ENCODE measurements at regions of chr3 and their contacts with region 1.

Region 1: GRCh38 chr3:171566803-171567422 is 106.7 kb upstream of the TNIK start:
- DNase-seq: no peak
- H3K4me3 ChIP-seq: no peak overlapping the region
- H3K27ac ChIP-seq: no peak overlapping the region
- H3K4me1 ChIP-seq: no peaks in the 10 kb centered on the region
- H3K27me3 ChIP-seq: no peaks in the 10 kb centered on the region
- CTCF ChIP-seq: peak; percentile 76 to 84 (median 81)
- EP300 ChIP-seq: no peak
- POLR2A ChIP-seq: no peak

Region 2: DNA sequence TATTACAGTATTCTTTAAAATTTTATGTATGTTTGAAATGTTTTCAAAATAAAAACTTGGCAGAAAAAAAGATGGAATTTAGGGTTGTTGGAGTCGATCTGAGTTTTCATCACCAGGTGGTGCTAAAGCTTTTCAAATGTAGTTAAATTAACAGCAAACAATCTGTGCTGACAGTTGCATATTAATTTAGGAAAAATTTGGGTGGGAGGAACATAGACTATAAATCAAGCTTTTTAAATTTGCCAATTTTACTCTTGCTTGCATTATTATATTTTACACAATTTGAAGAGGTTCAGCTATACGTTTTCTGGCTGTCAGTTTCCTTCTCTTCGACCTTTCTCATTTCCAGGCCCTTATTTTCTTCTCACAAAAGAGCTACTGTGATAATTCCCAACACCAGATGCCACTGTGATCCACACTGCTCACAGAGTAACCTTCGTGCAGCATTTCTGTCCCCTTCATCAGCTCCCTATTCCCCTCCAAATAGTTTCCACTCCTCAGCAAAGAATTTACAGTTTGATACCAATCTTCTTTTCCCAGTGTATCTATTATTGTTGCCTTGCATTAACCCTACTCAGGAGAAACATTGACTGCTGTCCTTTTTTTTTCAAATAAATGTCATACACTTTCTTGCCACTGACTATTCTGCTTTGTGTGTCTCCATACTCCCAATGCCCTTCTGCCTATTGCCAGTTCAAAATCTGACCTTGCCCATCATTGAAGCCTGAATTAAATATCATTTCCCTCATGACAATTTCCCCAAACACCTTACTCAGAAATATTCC is 605.1 kb before region 1 on chr3:
- in situ Hi-C with region 1: loop called (anchors 10 to 25 kb)
- intact Hi-C with region 1: loop called (anchors 5 kb)
- DNase-seq: no peak
- H3K4me3 ChIP-seq: no peak overlapping the region
- H3K27ac ChIP-seq: peak overlapping the region in 1 of 4 donors; percentile 35
- H3K4me1 ChIP-seq: peaks cover 0 to 10% (median 3%) of the 10 kb centered on the region in 4 donors
- H3K27me3 ChIP-seq: no peaks in the 10 kb centered on the region
- CTCF ChIP-seq: peak; percentile 47 to 69 (median 61)
- EP300 ChIP-seq: no peak
- POLR2A ChIP-seq: no peak

Region 3: GRCh38 chr3:171049861-171050444 is 517.0 kb before region 1 on chr3:
- in situ Hi-C with region 1: no loop called
- intact Hi-C with region 1: loop called (anchors 5 kb)
- DNase-seq: peak; percentile 39
- H3K4me3 ChIP-seq: no peak overlapping the region
- H3K27ac ChIP-seq: no peak overlapping the region
- H3K4me1 ChIP-seq: no peaks in the 10 kb centered on the region
- H3K27me3 ChIP-seq: no peaks in the 10 kb centered on the region
- CTCF ChIP-seq: peak; percentile 38 to 47 (median 43)
- EP300 ChIP-seq: no peak
- POLR2A ChIP-seq: no peak

Region 4: DNA sequence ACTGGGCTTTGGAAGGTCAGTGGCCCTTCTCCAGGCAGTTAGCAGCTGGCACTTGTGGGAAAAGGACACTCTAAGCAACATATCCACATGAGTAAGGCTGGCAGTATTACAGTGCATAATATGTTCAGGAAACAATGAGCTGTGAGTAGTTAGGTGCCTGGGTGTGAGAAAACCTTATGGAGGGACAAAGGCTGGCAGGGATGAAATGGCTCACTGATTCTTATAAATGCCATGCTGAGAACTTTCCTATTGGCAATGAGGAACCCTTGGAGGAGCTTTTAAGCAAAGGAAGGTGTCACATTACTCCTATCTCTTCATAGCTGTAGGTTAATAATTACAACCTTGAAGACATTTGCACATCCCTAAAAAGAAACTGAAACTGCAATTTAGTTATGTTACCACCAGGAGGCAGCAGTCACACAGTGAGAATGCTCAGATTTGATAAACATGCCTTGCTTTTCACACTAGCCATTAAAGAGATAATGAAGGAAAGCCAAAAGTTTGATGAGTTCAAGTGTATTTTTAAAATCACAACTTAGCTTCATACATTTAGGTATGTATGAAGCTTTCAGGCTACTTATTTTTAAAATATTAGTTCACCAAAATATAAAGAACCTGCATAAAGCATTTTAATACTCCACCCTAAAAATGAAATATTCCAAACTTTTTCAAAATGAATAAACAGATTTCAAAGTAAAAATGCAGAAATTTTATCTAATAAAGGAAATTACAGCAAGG is 403.8 kb before region 1 on chr3:
- in situ Hi-C with region 1: loop called in 3 of 4 experiments (anchors 25 kb)
- intact Hi-C with region 1: no loop called
- DNase-seq: no peak
- H3K4me3 ChIP-seq: no peak overlapping the region
- H3K27ac ChIP-seq: no peak overlapping the region
- H3K4me1 ChIP-seq: no peaks in the 10 kb centered on the region
- H3K27me3 ChIP-seq: no peaks in the 10 kb centered on the region
- CTCF ChIP-seq: peak; percentile 39 to 62 (median 54)
- EP300 ChIP-seq: no peak
- POLR2A ChIP-seq: no peak

Region 5: GRCh38 chr3:171187706-171188290 is 379.1 kb before region 1 on chr3:
- in situ Hi-C with region 1: loop called in 1 of 4 experiments (anchors 10 kb)
- intact Hi-C with region 1: loop called (anchors 5 kb)
- DNase-seq: no peak
- H3K4me3 ChIP-seq: no peak overlapping the region
- H3K27ac ChIP-seq: no peak overlapping the region
- H3K4me1 ChIP-seq: peaks cover 0 to 11% (median 1%) of the 10 kb centered on the region in 4 donors
- H3K27me3 ChIP-seq: no peaks in the 10 kb centered on the region
- CTCF ChIP-seq: peak; percentile 49 to 58 (median 52)
- EP300 ChIP-seq: no peak
- POLR2A ChIP-seq: no peak

Region 6: DNA sequence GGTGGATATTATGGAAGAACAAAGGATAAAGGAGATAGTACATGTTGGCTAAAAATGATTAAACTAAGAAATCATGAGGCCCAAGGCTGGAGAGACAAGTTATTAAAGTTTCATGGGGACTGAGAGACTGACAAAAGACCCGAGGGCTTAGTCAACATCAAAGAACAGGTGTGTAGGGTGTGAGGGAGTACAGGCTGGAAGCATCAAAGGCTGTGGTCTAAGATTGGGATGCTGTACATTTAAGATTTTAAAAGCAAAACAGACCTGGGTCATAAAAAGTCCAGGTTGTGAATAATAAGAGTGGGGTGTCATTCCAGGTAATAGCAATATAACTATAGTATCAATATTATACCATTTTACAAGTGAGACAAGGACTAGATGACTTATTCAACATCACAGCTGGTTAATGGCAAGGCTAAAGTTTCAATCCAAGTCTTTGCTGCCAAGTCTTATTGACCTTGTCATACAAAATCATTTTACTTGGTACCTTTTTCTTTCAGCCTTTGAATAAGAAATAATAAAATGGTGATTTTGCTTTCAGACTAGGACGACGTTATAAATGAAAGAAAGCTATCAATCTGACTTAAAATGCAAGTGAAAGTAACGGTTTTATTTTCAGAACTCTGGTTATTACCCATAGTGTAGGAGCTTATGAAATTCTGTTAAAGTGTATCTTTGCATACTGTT is 318.3 kb before region 1 on chr3:
- in situ Hi-C with region 1: no loop called
- intact Hi-C with region 1: no loop called
- DNase-seq: no peak
- H3K4me3 ChIP-seq: no peak overlapping the region
- H3K27ac ChIP-seq: no peak overlapping the region
- H3K4me1 ChIP-seq: no peaks in the 10 kb centered on the region
- H3K27me3 ChIP-seq: no peaks in the 10 kb centered on the region
- CTCF ChIP-seq: no peak
- EP300 ChIP-seq: no peak
- POLR2A ChIP-seq: no peak

Region 7: DNA sequence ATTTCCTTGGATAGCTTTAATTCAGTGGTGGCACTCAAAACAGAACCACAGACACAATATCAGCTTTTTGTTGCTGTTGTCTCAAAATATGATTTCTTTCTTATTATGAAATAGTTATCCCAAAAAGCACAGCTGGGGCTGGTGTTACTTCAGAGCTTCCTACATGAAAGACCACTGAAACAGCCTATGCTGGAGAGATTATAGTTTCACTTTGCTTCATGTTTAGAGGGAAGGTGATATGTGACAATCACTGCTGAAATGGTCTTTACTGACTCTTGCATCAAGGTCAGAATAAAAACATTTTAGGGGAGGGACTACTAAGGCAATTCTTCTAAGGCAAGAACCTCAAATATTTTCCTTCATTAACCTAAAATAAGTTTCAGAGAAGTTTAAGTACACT is 297.4 kb before region 1 on chr3:
- in situ Hi-C with region 1: no loop called
- intact Hi-C with region 1: no loop called
- DNase-seq: no peak
- H3K4me3 ChIP-seq: no peak overlapping the region
- H3K27ac ChIP-seq: no peak overlapping the region
- H3K4me1 ChIP-seq: peaks cover 0 to 23% (median 0%) of the 10 kb centered on the region in 4 donors
- H3K27me3 ChIP-seq: no peaks in the 10 kb centered on the region
- CTCF ChIP-seq: no peak
- EP300 ChIP-seq: no peak
- POLR2A ChIP-seq: no peak

Region 8: DNA sequence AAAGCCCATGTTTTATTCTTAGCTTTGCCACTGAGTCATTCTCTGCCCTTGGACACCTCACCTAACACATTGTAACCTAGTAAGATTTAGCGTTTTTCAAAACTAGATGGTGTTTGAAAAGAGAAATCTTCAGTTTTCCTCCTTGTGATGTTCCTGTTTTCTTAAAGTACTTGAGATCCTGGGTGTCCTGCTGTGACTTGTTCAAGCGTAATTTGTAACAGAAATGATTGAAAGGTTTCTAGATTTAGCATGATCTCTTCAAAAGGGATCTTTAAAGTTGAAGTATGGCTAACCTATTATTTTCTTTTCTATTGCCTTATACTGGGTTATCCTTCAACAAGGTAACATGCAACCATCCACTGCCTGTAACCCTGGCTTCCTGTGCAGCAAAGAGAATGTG is 1606.7 kb after region 1 on chr3:
- in situ Hi-C with region 1: no loop called
- intact Hi-C with region 1: loop called (anchors 5 kb)
- DNase-seq: no peak
- H3K4me3 ChIP-seq: no peak overlapping the region
- H3K27ac ChIP-seq: no peak overlapping the region
- H3K4me1 ChIP-seq: no peaks in the 10 kb centered on the region
- H3K27me3 ChIP-seq: no peaks in the 10 kb centered on the region
- CTCF ChIP-seq: no peak
- EP300 ChIP-seq: no peak
- POLR2A ChIP-seq: no peak

Measured in transverse colon (tissue), 4 donors.